CD8-positive, alpha-beta T cell (primary cell): ENCODE measurements at regions of chr4 and their contacts with region 1.

Region 1: GRCh38 chr4:163554870-163555465 is 60.5 kb downstream of the TMA16 start:
- DNase-seq: peak in 2 of 9 experiments; percentile 32 to 51
- ATAC-seq: no peak
- H3K4me3 ChIP-seq: no peak overlapping the region
- H3K4me3 Mint-ChIP-seq: no peak overlapping the region
- H3K27ac ChIP-seq: no peak overlapping the region
- H3K27ac Mint-ChIP-seq: no peak overlapping the region
- H3K4me1 ChIP-seq: peaks cover 23% of the 10 kb centered on the region
- H3K4me1 Mint-ChIP-seq: peaks cover 28% of the 10 kb centered on the region
- H3K27me3 ChIP-seq: no peaks in the 10 kb centered on the region
- H3K27me3 Mint-ChIP-seq: peaks cover 3% of the 10 kb centered on the region
- CTCF ChIP-seq: peak; percentile 87

Region 2: GRCh38 chr4:163681208-163681821 is 126.3 kb after region 1 on chr4:
- CTCF ChIA-PET with region 1: interaction called, 129 read pairs
- POLR2A ChIA-PET with region 1: no interaction called
- intact Hi-C with region 1: loop called (anchors 1 kb)
- DNase-seq: peak in 4 of 9 experiments; percentile 13 to 73 (median 50)
- ATAC-seq: peak; percentile 55
- H3K4me3 ChIP-seq: no peak overlapping the region
- H3K4me3 Mint-ChIP-seq: no peak overlapping the region
- H3K27ac ChIP-seq: no peak overlapping the region
- H3K27ac Mint-ChIP-seq: no peak overlapping the region
- H3K4me1 ChIP-seq: no peaks in the 10 kb centered on the region
- H3K4me1 Mint-ChIP-seq: no peaks in the 10 kb centered on the region
- H3K27me3 ChIP-seq: no peaks in the 10 kb centered on the region
- H3K27me3 Mint-ChIP-seq: peaks cover 3% of the 10 kb centered on the region
- CTCF ChIP-seq: peak; percentile 74

Region 3: GRCh38 chr4:164012396-164013027 is 457.5 kb after region 1 on chr4:
- CTCF ChIA-PET with region 1: no interaction called
- POLR2A ChIA-PET with region 1: no interaction called
- intact Hi-C with region 1: loop called in 1 of 2 experiments (anchors 5 kb)
- DNase-seq: peak in 5 of 9 experiments; percentile 17 to 59 (median 37)
- ATAC-seq: no peak
- H3K4me3 ChIP-seq: no peak overlapping the region
- H3K4me3 Mint-ChIP-seq: no peak overlapping the region
- H3K27ac ChIP-seq: no peak overlapping the region
- H3K27ac Mint-ChIP-seq: no peak overlapping the region
- H3K4me1 ChIP-seq: no peaks in the 10 kb centered on the region
- H3K4me1 Mint-ChIP-seq: no peaks in the 10 kb centered on the region
- H3K27me3 ChIP-seq: no peaks in the 10 kb centered on the region
- H3K27me3 Mint-ChIP-seq: no peaks in the 10 kb centered on the region
- CTCF ChIP-seq: no peak

Region 4: GRCh38 chr4:164440199-164440598 is 885.2 kb after region 1 on chr4:
- CTCF ChIA-PET with region 1: no interaction called
- POLR2A ChIA-PET with region 1: no interaction called
- intact Hi-C with region 1: no loop called
- DNase-seq: no peak
- ATAC-seq: no peak
- H3K4me3 ChIP-seq: no peak overlapping the region
- H3K4me3 Mint-ChIP-seq: no peak overlapping the region
- H3K27ac ChIP-seq: no peak overlapping the region
- H3K27ac Mint-ChIP-seq: no peak overlapping the region
- H3K4me1 ChIP-seq: no peaks in the 10 kb centered on the region
- H3K4me1 Mint-ChIP-seq: no peaks in the 10 kb centered on the region
- H3K27me3 ChIP-seq: no peaks in the 10 kb centered on the region
- H3K27me3 Mint-ChIP-seq: no peaks in the 10 kb centered on the region
- CTCF ChIP-seq: no peak

Region 5: GRCh38 chr4:164748375-164748774 is 1193.4 kb after region 1 on chr4:
- CTCF ChIA-PET with region 1: interaction called, 4 read pairs
- POLR2A ChIA-PET with region 1: no interaction called
- intact Hi-C with region 1: loop called in 1 of 2 experiments (anchors 5 kb)
- DNase-seq: peak in 2 of 9 experiments; percentile 6 to 8
- ATAC-seq: no peak
- H3K4me3 ChIP-seq: no peak overlapping the region
- H3K4me3 Mint-ChIP-seq: no peak overlapping the region
- H3K27ac ChIP-seq: no peak overlapping the region
- H3K27ac Mint-ChIP-seq: no peak overlapping the region
- H3K4me1 ChIP-seq: no peaks in the 10 kb centered on the region
- H3K4me1 Mint-ChIP-seq: no peaks in the 10 kb centered on the region
- H3K27me3 ChIP-seq: no peaks in the 10 kb centered on the region
- H3K27me3 Mint-ChIP-seq: no peaks in the 10 kb centered on the region
- CTCF ChIP-seq: no peak

Region 6: GRCh38 chr4:165464813-165465381 is 1909.9 kb after region 1 on chr4:
- CTCF ChIA-PET with region 1: interaction called, 3 read pairs
- POLR2A ChIA-PET with region 1: no interaction called
- intact Hi-C with region 1: loop called in 1 of 2 experiments (anchors 5 kb)
- DNase-seq: peak in 4 of 9 experiments; percentile 9 to 66 (median 35)
- ATAC-seq: peak; percentile 42
- H3K4me3 ChIP-seq: no peak overlapping the region
- H3K4me3 Mint-ChIP-seq: no peak overlapping the region
- H3K27ac ChIP-seq: no peak overlapping the region
- H3K27ac Mint-ChIP-seq: no peak overlapping the region
- H3K4me1 ChIP-seq: no peaks in the 10 kb centered on the region
- H3K4me1 Mint-ChIP-seq: no peaks in the 10 kb centered on the region
- H3K27me3 ChIP-seq: no peaks in the 10 kb centered on the region
- H3K27me3 Mint-ChIP-seq: peaks cover 3% of the 10 kb centered on the region
- CTCF ChIP-seq: peak; percentile 86